Natural killer cell (primary cell): ENCODE measurements at regions of chr20 and their contacts with region 1.

Region 1: DNA sequence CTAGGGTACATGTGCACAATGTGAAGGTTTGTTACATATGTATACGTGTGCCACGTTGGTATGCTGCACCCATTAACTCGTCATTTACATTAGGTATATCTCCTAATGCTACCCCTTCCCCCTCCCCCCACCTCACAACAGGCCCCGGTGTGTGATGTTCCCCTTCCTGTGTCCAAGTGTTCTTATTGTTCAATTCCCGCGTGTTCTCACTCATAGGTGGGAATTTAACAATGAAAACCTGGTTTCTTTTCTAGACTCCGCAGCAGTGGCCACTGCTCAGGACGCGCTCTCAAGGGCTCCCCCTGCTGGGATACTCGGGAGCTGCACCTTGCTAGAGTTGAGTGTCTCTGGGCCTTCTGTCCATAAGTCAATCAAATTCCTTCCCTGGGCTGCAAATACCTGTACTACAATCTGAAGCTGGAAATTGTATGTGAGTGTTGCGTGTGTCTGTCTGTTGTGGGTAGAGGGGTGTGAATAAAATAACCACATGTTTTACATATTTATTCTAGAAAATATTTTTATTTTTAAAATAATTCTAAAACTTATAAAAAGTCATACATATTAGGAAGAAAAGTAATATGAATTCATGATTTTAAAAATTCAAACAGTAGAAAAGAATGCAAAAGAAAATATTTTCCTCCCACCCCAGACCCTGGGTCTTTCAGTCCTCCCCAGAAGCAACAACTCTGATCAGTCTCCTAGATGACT is 8.2 kb upstream of the CEP250 start:
- DNase-seq: peak; percentile 90 to 92
- ATAC-seq: peak; percentile 96 to 100 (median 99)
- H3K4me3 ChIP-seq: peak overlapping the region; percentile 21
- H3K4me3 Mint-ChIP-seq: peak overlapping the region; percentile 90
- H3K27ac ChIP-seq: no peak overlapping the region
- H3K27ac Mint-ChIP-seq: peak overlapping the region in 1 of 2 donors; percentile 77
- H3K4me1 ChIP-seq: peaks cover 3% of the 10 kb centered on the region
- H3K4me1 Mint-ChIP-seq: peaks cover 5% of the 10 kb centered on the region in 2 donors
- H3K27me3 ChIP-seq: no peaks in the 10 kb centered on the region
- H3K27me3 Mint-ChIP-seq: peaks cover 0 to 4% of the 10 kb centered on the region in 2 donors
- CTCF ChIP-seq: peak; percentile 88

Region 2: GRCh38 chr20:34834459-34834893 is 612.8 kb before region 1 on chr20:
- intact Hi-C with region 1: loop called (anchors 10 kb)
- DNase-seq: peak in 1 of 2 donors; percentile 63
- ATAC-seq: peak in 1 of 3 donors; percentile 63
- H3K4me3 ChIP-seq: no peak overlapping the region
- H3K4me3 Mint-ChIP-seq: no peak overlapping the region
- H3K27ac ChIP-seq: no peak overlapping the region
- H3K27ac Mint-ChIP-seq: no peak overlapping the region
- H3K4me1 ChIP-seq: no peaks in the 10 kb centered on the region
- H3K4me1 Mint-ChIP-seq: peaks cover 0 to 6% of the 10 kb centered on the region in 2 donors
- H3K27me3 ChIP-seq: no peaks in the 10 kb centered on the region
- H3K27me3 Mint-ChIP-seq: peaks cover 21 to 25% of the 10 kb centered on the region in 2 donors
- CTCF ChIP-seq: peak; percentile 65

Region 3: DNA sequence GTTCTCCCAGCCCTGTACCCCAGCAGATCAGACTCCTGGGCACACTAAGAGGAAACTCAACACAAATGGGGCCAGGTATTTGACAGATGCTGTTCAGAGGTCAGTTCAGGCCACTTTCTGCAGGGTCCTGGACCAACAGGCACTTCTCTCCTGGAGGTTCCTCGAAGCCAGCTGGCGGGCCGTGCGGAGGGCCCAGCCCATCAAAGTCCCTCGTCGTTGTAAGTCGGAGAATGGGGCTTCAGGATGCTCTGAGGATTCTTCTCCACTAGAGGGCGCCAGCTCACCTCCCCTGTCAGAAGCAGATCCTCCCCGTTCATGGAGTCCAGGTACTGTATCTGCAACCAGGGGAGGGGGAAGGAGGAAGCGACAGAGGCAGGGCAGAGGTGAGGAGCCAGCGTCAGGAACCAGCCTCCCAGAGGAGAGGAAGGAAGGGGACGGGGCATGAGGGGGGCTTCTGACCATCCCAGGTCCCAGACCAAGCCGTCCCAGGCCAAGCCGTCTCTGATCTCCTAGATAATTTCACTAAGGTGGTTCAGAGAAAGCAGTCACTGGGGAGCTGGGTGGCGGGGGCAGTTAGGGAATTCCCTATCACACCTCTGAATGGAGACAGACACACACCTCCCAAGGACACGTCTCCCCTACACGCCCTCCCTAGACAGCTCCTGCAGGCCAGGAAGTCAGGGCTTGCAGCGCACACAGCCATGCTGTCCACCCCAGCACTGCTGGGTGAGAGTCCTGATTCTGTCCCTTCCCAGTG is 143.3 kb before region 1 on chr20:
- intact Hi-C with region 1: loop called (anchors 1 kb)
- DNase-seq: peak; percentile 68 to 93
- ATAC-seq: peak; percentile 85 to 94 (median 93)
- H3K4me3 ChIP-seq: no peak overlapping the region
- H3K4me3 Mint-ChIP-seq: no peak overlapping the region
- H3K27ac ChIP-seq: no peak overlapping the region
- H3K27ac Mint-ChIP-seq: no peak overlapping the region
- H3K4me1 ChIP-seq: peaks cover 7% of the 10 kb centered on the region
- H3K4me1 Mint-ChIP-seq: peaks cover 5 to 7% of the 10 kb centered on the region in 2 donors
- H3K27me3 ChIP-seq: no peaks in the 10 kb centered on the region
- H3K27me3 Mint-ChIP-seq: no peaks in the 10 kb centered on the region
- CTCF ChIP-seq: peak; percentile 82